Activated CD4-positive, alpha-beta memory T cell treated with anti-CD3 and anti-CD28 coated beads for 36 hours (primary cell): ENCODE measurements at regions of chr4 and their contacts with region 1.

Region 1: DNA sequence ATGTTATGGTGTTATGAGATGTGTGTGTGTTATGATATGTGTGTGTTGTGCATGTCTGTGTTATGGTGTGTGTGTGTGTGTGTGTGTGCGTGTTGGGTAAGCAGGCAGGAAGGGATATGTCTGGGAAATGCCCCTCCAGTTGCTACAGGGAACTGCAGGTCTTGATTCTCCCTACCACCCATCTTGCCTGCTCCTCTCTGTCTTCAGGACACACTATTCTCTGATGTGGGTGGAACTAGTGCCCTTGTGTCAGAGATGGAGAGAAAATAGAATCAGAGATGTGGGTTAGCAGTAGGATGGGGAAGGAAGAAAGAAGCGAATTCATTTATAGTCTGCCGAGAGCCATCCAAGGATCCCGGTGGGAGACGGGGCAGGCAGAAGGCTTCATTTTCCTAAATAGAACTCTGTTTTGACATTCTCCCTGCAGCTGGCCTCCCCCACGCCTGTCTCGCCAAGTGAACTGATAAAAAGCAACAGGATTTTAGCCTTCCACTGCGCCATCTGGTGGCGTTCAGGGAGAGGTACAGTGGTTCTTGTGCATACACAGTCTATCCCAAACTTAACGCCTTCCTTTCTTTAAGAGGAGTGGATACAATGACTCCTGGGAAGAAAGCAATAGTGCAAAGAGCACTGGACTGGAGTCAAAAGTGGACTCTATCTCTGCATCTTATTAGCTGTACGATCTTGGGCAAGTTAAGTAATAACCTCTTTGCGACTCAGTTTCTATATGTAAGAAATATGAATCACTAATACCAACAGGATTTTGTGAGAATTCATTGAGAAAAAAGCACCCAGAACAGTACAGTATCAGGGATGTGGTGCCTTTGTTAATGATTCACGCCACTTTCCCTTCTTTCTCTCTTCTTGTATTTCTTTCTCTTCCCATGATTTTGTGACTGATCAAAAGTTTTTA is 14.1 kb upstream of the MGST2 start:
- DNase-seq: peak; percentile 77
- H3K4me3 Mint-ChIP-seq: no peak overlapping the region
- H3K27ac Mint-ChIP-seq: no peak overlapping the region
- H3K4me1 Mint-ChIP-seq: peaks cover 4% of the 10 kb centered on the region
- H3K27me3 Mint-ChIP-seq: peaks cover 5% of the 10 kb centered on the region

Region 2: DNA sequence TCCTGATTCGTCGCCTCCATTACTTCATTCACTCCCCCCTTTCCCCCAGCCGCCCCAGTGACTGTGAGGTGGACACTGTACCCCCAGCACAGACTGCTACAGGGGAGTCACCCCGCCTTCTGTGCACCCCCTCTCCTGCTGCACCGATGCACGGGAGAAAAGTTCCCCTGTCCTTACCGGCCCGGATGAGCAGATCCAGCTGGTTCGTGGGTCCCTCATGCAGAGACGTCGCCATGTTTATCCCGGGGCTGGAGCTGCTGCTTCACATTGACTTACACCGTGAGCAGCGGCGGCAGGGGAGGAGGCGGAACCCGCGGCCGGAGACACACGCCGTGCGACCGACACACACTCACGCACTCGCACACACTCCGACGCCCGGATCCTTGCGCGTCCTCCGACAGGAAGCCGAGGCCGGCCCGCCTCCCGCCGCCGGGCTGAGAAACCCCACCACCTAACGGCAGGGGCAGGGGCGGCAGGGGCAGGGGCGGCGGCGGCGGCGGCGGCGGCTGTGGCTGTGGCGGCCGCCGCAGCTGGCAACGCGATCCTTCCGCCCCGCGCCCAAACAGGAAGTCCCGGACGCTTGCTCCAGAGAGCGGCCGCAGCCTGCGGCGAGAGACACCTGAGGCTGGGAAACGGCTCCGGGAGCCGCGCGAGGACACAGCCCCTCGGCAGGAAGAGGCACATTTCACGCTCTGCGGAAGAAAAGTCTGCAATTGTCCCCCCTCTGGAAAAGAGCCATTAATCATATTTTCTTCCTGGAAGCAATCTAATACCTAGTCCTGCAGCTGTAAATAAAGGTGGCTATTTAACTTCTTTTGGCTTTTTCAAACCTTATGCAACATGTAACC is 567.4 kb before region 1 on chr4:
- CTCF ChIA-PET with region 1: no interaction called
- POLR2A ChIA-PET with region 1: no interaction called
- intact Hi-C with region 1: loop called (anchors 10 kb)
- DNase-seq: peak; percentile 90
- H3K4me3 Mint-ChIP-seq: peak overlapping the region; percentile 98
- H3K27ac Mint-ChIP-seq: peak overlapping the region; percentile 99
- H3K4me1 Mint-ChIP-seq: peaks cover 36% of the 10 kb centered on the region
- H3K27me3 Mint-ChIP-seq: no peaks in the 10 kb centered on the region

Region 3: DNA sequence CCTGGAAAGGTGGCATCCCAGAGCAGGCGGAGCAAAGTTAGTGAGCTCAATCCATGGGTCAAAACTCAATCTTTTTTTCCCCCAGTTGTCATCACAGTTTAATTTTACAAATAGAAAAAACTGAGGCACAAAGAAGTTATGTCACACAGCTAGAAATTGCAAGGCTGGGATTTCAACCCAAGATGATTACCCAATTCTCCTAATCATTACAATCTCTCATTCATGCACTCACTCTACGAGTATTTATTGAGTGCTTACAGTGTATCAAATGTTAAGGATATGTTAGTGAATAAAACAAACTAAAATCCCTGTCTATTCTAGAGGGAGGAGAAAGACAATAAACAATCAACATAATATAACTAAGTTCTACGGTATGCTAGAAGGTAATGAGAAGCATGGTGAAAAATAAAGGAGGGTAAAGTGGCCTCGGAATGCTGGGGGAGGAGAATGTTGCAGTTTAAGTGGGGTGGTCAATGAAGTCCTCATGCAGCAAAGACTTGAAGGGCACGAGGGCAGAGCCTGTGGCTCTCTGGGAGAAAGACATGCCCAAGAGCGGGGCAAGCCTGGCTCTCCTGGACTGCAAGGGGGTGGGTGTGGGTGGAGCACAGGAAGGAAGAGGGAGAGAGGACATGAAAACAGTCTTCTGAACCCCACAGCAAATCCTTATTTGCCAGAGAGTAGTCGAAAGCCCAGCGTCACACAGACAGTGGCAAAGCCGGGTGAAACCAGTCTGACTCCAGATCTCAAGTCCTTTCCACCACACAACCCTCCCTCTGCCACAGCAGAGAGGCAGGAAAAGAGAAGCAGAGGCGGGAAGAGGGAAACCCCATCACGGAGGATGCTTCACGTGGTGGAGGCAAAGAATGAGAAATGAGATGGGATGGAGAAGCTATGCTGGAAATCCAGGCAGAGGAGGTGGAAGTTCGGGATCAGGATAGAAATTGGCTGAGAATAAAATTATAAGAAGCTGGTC is 149.3 kb before region 1 on chr4:
- CTCF ChIA-PET with region 1: interaction called, 6 read pairs
- POLR2A ChIA-PET with region 1: no interaction called
- intact Hi-C with region 1: loop called (anchors 1 kb)
- DNase-seq: no peak
- H3K4me3 Mint-ChIP-seq: no peak overlapping the region
- H3K27ac Mint-ChIP-seq: no peak overlapping the region
- H3K4me1 Mint-ChIP-seq: peaks cover 2% of the 10 kb centered on the region
- H3K27me3 Mint-ChIP-seq: no peaks in the 10 kb centered on the region

Region 4: GRCh38 chr4:139609647-139610046 is 41.9 kb before region 1 on chr4:
- CTCF ChIA-PET with region 1: interaction called, 114 read pairs
- POLR2A ChIA-PET with region 1: no interaction called
- intact Hi-C with region 1: no loop called
- DNase-seq: no peak
- H3K4me3 Mint-ChIP-seq: no peak overlapping the region
- H3K27ac Mint-ChIP-seq: no peak overlapping the region
- H3K4me1 Mint-ChIP-seq: peaks cover 12% of the 10 kb centered on the region
- H3K27me3 Mint-ChIP-seq: peaks cover 5% of the 10 kb centered on the region

Region 5: GRCh38 chr4:139672215-139672614 is 20.7 kb after region 1 on chr4:
- CTCF ChIA-PET with region 1: interaction called, 23 read pairs
- POLR2A ChIA-PET with region 1: no interaction called
- intact Hi-C with region 1: no loop called
- DNase-seq: no peak
- H3K4me3 Mint-ChIP-seq: no peak overlapping the region
- H3K27ac Mint-ChIP-seq: no peak overlapping the region
- H3K4me1 Mint-ChIP-seq: no peaks in the 10 kb centered on the region
- H3K27me3 Mint-ChIP-seq: no peaks in the 10 kb centered on the region

Region 6: DNA sequence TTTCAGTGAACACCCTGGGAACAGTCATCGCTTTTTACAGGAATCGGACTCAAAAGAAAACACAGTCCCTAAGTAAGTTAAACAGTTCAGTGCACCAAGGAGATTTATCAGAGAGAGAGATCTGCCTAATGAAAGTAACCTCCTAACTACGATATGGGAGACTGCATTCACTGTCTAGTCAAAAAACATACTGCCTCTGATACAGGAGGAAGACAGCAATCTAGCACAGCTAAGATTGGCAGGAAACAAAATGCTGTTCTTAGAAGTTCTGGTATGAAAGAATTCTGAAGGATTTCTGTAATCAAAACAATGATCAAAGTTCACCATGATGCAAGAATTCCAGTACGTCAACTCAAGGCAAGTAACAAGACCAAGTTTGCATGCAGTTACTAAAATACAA is 409.7 kb after region 1 on chr4:
- CTCF ChIA-PET with region 1: no interaction called
- POLR2A ChIA-PET with region 1: no interaction called
- intact Hi-C with region 1: no loop called
- DNase-seq: no peak
- H3K4me3 Mint-ChIP-seq: no peak overlapping the region
- H3K27ac Mint-ChIP-seq: no peak overlapping the region
- H3K4me1 Mint-ChIP-seq: peaks cover 3% of the 10 kb centered on the region
- H3K27me3 Mint-ChIP-seq: peaks cover 15% of the 10 kb centered on the region